PC-9 (cell line): ENCODE measurements at regions of chr1 and their contacts with region 1.

Region 1: GRCh38 chr1:52127181-52128180 is 14.4 kb upstream of the ZFYVE9 start:
- DNase-seq: peak; percentile 32 to 50
- H3K4me3 ChIP-seq: no peak overlapping the region
- H3K27ac ChIP-seq: no peak overlapping the region
- H3K4me1 ChIP-seq: no peaks in the 10 kb centered on the region
- H3K27me3 ChIP-seq: no peaks in the 10 kb centered on the region
- CTCF ChIP-seq: peak; percentile 76

Region 2: DNA sequence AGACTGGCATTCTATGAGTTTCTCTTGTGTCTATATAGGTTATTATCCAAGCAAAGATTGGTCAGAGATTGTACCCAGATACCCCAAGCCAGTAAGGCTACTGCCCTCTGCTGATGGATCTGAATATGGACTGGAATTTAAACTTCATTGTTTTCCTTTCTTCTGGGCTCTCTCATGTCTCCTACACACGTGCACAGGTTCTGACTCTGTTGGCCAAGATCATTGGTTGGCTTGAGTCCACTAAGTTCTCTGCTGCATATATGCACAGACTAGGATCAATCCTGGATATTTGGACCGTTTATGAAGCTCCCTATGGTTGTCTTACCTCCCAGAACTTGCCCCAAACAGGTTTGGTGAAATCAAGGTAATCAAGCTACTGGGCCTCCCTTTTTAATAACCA is 168.9 kb after region 1 on chr1:
- CTCF ChIA-PET with region 1: interaction called, 8 read pairs
- POLR2A ChIA-PET with region 1: no interaction called
- intact Hi-C with region 1: loop called (anchors 1 kb)
- DNase-seq: peak; percentile 3 to 57
- H3K4me3 ChIP-seq: no peak overlapping the region
- H3K27ac ChIP-seq: no peak overlapping the region
- H3K4me1 ChIP-seq: no peaks in the 10 kb centered on the region
- H3K27me3 ChIP-seq: no peaks in the 10 kb centered on the region
- CTCF ChIP-seq: peak; percentile 79

Region 3: GRCh38 chr1:52348704-52349300 is 221.3 kb after region 1 on chr1:
- CTCF ChIA-PET with region 1: no interaction called
- POLR2A ChIA-PET with region 1: no interaction called
- intact Hi-C with region 1: loop called (anchors 1 kb)
- DNase-seq: peak in 1 of 2 experiments; percentile 23
- H3K4me3 ChIP-seq: no peak overlapping the region
- H3K27ac ChIP-seq: no peak overlapping the region
- H3K4me1 ChIP-seq: no peaks in the 10 kb centered on the region
- H3K27me3 ChIP-seq: no peaks in the 10 kb centered on the region
- CTCF ChIP-seq: 0 out of 2 replicates have a peak, but pooled peaks have one; percentile 17

Region 4: GRCh38 chr1:52683367-52683940 is 556.0 kb after region 1 on chr1:
- CTCF ChIA-PET with region 1: no interaction called
- POLR2A ChIA-PET with region 1: no interaction called
- intact Hi-C with region 1: loop called (anchors 5 kb)
- DNase-seq: no peak
- H3K4me3 ChIP-seq: no peak overlapping the region
- H3K27ac ChIP-seq: no peak overlapping the region
- H3K4me1 ChIP-seq: no peaks in the 10 kb centered on the region
- H3K27me3 ChIP-seq: no peaks in the 10 kb centered on the region
- CTCF ChIP-seq: no peak